ENCODE measurements at regions of chr5 and their contacts with region 1.

Region 1: GRCh38 chr5:82793808-82794419 is 283.3 kb downstream of the TMEM167A start:
- DNase-seq: peak in 4 of 5 donors; percentile 16 to 28 (median 22)
- H3K4me3 ChIP-seq: no peak overlapping the region
- H3K4me3 Mint-ChIP-seq: no peak overlapping the region
- H3K27ac ChIP-seq: no peak overlapping the region
- H3K27ac Mint-ChIP-seq: peak overlapping the region in 1 of 7 donors; percentile 17
- H3K4me1 ChIP-seq: no peaks in the 10 kb centered on the region
- H3K4me1 Mint-ChIP-seq: no peaks in the 10 kb centered on the region
- H3K27me3 ChIP-seq: no peaks in the 10 kb centered on the region
- H3K27me3 Mint-ChIP-seq: peaks cover 2 to 4% of the 10 kb centered on the region in 2 donors

Region 2: DNA sequence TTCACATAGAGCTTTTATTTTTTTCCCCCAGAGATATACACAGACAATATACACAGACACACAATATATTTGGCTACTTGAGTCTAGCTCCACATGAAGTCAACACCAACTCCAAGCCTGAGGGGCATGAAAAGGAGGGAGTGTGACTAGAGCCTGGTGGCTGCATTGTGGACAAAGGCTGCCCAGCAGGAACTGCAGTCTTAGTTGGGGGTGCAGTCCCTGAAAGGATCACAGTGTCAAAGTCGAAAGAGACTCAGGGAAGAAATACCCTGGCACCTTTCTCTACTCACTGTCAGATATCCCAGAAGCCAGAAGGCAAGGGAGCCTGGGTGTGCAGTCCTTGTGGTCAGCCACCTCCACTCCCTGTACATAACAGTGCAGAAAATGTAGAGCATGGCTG is 284.2 kb before region 1 on chr5:
- CTCF ChIA-PET with region 1: no interaction called
- POLR2A ChIA-PET with region 1: no interaction called
- intact Hi-C with region 1: no loop called
- DNase-seq: no peak
- H3K4me3 ChIP-seq: no peak overlapping the region
- H3K4me3 Mint-ChIP-seq: no peak overlapping the region
- H3K27ac ChIP-seq: no peak overlapping the region
- H3K27ac Mint-ChIP-seq: no peak overlapping the region
- H3K4me1 ChIP-seq: no peaks in the 10 kb centered on the region
- H3K4me1 Mint-ChIP-seq: peaks cover 0 to 11% (median 4%) of the 10 kb centered on the region in 4 donors
- H3K27me3 ChIP-seq: no peaks in the 10 kb centered on the region
- H3K27me3 Mint-ChIP-seq: peaks cover 0 to 4% of the 10 kb centered on the region in 2 donors

Region 3: GRCh38 chr5:82676661-82677060 is 117.3 kb before region 1 on chr5:
- CTCF ChIA-PET with region 1: no interaction called
- POLR2A ChIA-PET with region 1: no interaction called
- intact Hi-C with region 1: loop called (anchors 10 kb)
- DNase-seq: peak in 2 of 5 donors; percentile 1 to 9
- H3K4me3 ChIP-seq: no peak overlapping the region
- H3K4me3 Mint-ChIP-seq: peak overlapping the region; percentile 49 to 80 (median 60)
- H3K27ac ChIP-seq: no peak overlapping the region
- H3K27ac Mint-ChIP-seq: peak overlapping the region; percentile 39 to 75 (median 57)
- H3K4me1 ChIP-seq: peaks cover 17% of the 10 kb centered on the region
- H3K4me1 Mint-ChIP-seq: peaks cover 12 to 17% (median 17%) of the 10 kb centered on the region in 4 donors
- H3K27me3 ChIP-seq: no peaks in the 10 kb centered on the region
- H3K27me3 Mint-ChIP-seq: no peaks in the 10 kb centered on the region

Region 4: DNA sequence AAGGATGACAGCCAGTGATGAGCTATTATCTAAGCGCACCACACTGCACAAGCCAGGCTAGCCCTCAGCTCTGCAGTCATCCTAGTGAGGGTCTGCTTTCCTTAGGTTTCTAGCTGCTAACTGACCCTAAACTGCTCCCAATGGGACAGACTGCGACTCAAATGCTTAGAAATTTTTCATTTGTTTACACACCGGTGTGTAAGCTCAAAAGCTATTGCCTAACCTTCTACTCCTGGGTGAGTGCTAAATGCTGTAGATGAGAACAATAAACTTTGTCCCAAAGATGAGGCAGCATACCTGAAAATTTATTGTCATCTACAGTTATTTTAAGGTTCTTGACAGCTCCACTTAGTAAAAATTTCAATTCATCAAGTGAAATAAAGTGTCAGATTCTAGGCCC is 28.1 kb before region 1 on chr5:
- CTCF ChIA-PET with region 1: no interaction called
- POLR2A ChIA-PET with region 1: no interaction called
- intact Hi-C with region 1: no loop called
- DNase-seq: no peak
- H3K4me3 ChIP-seq: no peak overlapping the region
- H3K4me3 Mint-ChIP-seq: no peak overlapping the region
- H3K27ac ChIP-seq: no peak overlapping the region
- H3K27ac Mint-ChIP-seq: no peak overlapping the region
- H3K4me1 ChIP-seq: no peaks in the 10 kb centered on the region
- H3K4me1 Mint-ChIP-seq: no peaks in the 10 kb centered on the region
- H3K27me3 ChIP-seq: no peaks in the 10 kb centered on the region
- H3K27me3 Mint-ChIP-seq: peaks cover 5 to 9% of the 10 kb centered on the region in 2 donors

Region 5: GRCh38 chr5:83387041-83387440 is 593.1 kb after region 1 on chr5:
- CTCF ChIA-PET with region 1: no interaction called
- POLR2A ChIA-PET with region 1: no interaction called
- intact Hi-C with region 1: no loop called
- DNase-seq: no peak
- H3K4me3 ChIP-seq: no peak overlapping the region
- H3K4me3 Mint-ChIP-seq: no peak overlapping the region
- H3K27ac ChIP-seq: no peak overlapping the region
- H3K27ac Mint-ChIP-seq: no peak overlapping the region
- H3K4me1 ChIP-seq: no peaks in the 10 kb centered on the region
- H3K4me1 Mint-ChIP-seq: no peaks in the 10 kb centered on the region
- H3K27me3 ChIP-seq: no peaks in the 10 kb centered on the region
- H3K27me3 Mint-ChIP-seq: no peaks in the 10 kb centered on the region

Region 6: DNA sequence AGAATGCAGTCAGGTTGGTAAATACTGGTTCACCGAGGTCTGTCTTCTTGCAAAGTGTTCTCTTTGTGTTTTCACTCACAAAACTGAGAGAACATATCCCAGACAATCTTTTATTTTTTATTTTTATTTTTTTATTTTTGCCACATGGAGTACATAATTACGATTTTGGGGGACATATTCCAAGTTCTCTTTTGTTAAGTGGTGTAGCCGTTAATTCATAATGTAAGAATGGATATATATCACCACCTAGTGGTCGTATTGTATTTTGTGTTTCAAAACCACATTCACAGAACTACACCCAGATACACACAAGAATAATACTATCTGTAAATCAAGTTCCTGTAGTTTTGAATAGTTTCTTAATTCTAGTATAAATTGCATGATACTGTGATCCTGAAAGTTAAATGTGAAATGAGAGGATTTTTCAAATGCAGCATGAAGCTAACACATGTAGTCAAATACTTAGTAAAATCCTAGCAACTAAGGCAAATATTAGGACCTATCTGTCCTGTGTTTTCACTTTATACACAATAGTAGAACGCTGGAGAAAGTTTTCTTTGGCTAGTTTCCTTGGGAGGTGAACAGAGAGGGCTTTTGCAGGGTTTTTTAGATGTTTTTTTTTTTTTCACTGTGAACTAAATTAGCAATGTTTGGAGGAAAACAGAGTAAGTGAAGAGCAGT is 770.3 kb after region 1 on chr5:
- CTCF ChIA-PET with region 1: no interaction called
- POLR2A ChIA-PET with region 1: no interaction called
- intact Hi-C with region 1: loop called (anchors 5 kb)
- DNase-seq: peak in 4 of 5 donors; percentile 27 to 40 (median 34)
- H3K4me3 ChIP-seq: no peak overlapping the region
- H3K4me3 Mint-ChIP-seq: no peak overlapping the region
- H3K27ac ChIP-seq: no peak overlapping the region
- H3K27ac Mint-ChIP-seq: no peak overlapping the region
- H3K4me1 ChIP-seq: no peaks in the 10 kb centered on the region
- H3K4me1 Mint-ChIP-seq: no peaks in the 10 kb centered on the region
- H3K27me3 ChIP-seq: no peaks in the 10 kb centered on the region
- H3K27me3 Mint-ChIP-seq: peaks cover 13% of the 10 kb centered on the region in 2 donors